IMR-90 (cell line): ENCODE measurements at regions of chr12 and their contacts with region 1.

Region 1: DNA sequence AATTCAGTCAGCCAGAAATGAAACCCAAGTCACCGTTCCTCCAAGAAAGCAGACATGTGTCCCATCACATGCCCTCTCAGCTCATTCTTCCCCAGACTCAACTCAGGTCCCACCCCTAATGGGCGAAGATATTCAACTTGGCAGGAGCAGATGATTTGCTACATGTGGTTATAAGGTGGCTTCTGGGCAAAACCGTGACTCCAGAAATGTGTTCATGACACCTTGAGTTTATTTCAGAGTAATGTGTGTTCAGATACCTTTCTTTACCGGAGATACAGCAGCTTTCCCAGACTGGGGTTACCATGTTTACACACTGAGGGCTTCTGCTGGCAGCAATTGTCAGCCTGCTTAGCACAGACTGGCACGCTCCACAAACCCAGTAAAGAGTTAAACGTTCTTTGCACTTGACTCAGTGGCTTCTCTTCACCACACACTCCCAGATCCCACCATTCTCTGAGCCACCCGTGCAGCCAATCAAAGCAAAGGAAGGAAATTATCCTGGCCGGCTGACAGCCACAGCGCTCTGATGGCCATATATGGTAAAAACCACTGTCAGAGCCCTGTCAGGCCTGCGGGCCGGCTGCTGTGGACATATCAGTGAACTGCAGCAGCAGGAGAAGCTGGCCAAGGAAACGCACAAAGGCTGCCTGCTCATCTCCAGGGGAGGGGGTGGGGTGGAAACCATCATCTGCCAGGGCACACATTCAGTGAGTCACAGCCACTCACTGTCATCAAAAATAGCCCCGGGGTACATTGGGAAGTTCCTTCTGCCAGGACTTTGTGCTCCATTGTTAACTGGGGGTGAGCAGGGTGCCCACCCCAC is 39.9 kb downstream of the CORO1C start:
- DNase-seq: peak; percentile 99
- ATAC-seq: peak; percentile 84
- H3K4me3 ChIP-seq: peak overlapping the region; percentile 18
- H3K27ac ChIP-seq: peak overlapping the region; percentile 95
- H3K4me1 ChIP-seq: peaks cover 35% of the 10 kb centered on the region
- H3K27me3 ChIP-seq: no peaks in the 10 kb centered on the region
- CTCF ChIP-seq: peak; percentile 32; the same call in 1 of the 2 replicates
- POLR2A ChIP-seq: peak; percentile 82; the same call in 1 of the 2 replicates
- RAD21 ChIP-seq: peak; percentile 48

Region 2: GRCh38 chr12:108572166-108572790 is 119.1 kb before region 1 on chr12:
- CTCF ChIA-PET with region 1: no interaction called
- POLR2A ChIA-PET with region 1: no interaction called
- dilution Hi-C with region 1: no loop called
- in situ Hi-C with region 1: no loop called
- intact Hi-C with region 1: no loop called
- DNase-seq: no peak
- ATAC-seq: no peak
- H3K4me3 ChIP-seq: no peak overlapping the region
- H3K27ac ChIP-seq: no peak overlapping the region
- H3K4me1 ChIP-seq: no peaks in the 10 kb centered on the region
- H3K27me3 ChIP-seq: no peaks in the 10 kb centered on the region
- CTCF ChIP-seq: no peak
- POLR2A ChIP-seq: no peak
- RAD21 ChIP-seq: no peak

Region 3: DNA sequence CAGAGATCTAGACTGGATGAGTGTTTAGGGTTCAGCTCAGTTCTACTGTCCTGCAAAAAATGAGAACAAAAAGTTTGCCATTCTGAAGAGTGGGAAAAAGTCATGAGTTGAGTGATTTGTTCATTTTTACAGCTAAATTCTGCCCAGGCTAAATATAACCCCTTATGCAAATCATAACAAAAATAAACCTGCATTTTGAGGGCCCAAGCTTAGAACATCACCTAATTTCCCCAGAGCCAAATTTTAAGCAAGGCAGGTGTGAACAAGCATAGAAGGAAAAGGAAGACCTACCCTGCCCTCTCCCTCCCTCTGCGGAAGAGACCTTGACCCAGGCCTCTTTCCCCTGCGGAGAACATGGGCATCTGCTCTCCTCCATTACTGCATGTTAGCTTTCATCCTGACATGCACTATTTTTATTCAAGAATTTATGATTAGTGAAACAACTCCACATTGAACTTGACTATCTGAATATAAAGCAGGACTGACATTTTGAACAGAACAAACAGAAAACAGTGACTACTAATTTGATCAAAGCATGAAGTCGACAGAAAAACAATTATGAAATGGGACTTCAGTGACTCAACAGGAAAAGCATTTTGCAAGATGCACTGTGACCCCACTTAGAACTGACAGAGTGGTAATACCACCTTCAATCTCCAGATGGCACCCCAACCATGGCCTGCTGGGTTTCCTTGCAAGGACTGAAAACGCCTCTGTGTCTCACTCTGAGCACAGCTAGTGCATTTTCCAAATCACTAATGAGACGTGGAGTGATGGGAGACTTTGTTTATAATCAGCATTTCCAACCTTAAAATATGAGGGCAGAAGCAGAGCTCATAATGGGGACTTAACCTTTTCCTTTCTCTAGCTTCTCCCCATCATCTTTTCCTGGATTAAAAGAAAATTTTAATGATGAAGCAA is 26.8 kb before region 1 on chr12:
- CTCF ChIA-PET with region 1: interaction called, 7 read pairs
- POLR2A ChIA-PET with region 1: interaction called, 3 read pairs
- dilution Hi-C with region 1: no loop called
- in situ Hi-C with region 1: no loop called
- intact Hi-C with region 1: loop called (anchors 1 kb)
- DNase-seq: peak; percentile 95
- ATAC-seq: peak; percentile 92
- H3K4me3 ChIP-seq: no peak overlapping the region
- H3K27ac ChIP-seq: peak overlapping the region; percentile 85
- H3K4me1 ChIP-seq: peaks cover 30% of the 10 kb centered on the region
- H3K27me3 ChIP-seq: no peaks in the 10 kb centered on the region
- CTCF ChIP-seq: peak; percentile 98
- POLR2A ChIP-seq: peak; percentile 31; the same call in 1 of the 2 replicates
- RAD21 ChIP-seq: peak; percentile 99

Region 4: GRCh38 chr12:108701779-108702441 is 10.5 kb after region 1 on chr12:
- CTCF ChIA-PET with region 1: interaction called, 3 read pairs
- POLR2A ChIA-PET with region 1: interaction called, 13 read pairs
- dilution Hi-C with region 1: no loop called
- in situ Hi-C with region 1: no loop called
- intact Hi-C with region 1: no loop called
- DNase-seq: peak; percentile 63
- ATAC-seq: peak; percentile 48
- H3K4me3 ChIP-seq: no peak overlapping the region
- H3K27ac ChIP-seq: peak overlapping the region; percentile 91
- H3K4me1 ChIP-seq: peaks cover 34% of the 10 kb centered on the region
- H3K27me3 ChIP-seq: no peaks in the 10 kb centered on the region
- CTCF ChIP-seq: no peak
- POLR2A ChIP-seq: no peak
- RAD21 ChIP-seq: no peak

Region 5: GRCh38 chr12:108722992-108723766 is 31.8 kb after region 1 on chr12:
- CTCF ChIA-PET with region 1: interaction called, 5 read pairs
- POLR2A ChIA-PET with region 1: interaction called, 6 read pairs
- dilution Hi-C with region 1: no loop called
- in situ Hi-C with region 1: no loop called
- intact Hi-C with region 1: loop called (anchors 1 kb)
- DNase-seq: peak; percentile 95
- ATAC-seq: peak; percentile 61
- H3K4me3 ChIP-seq: peak overlapping the region; percentile 2; the same call in 1 of the 2 replicates
- H3K27ac ChIP-seq: peak overlapping the region; percentile 98
- H3K4me1 ChIP-seq: peaks cover 36% of the 10 kb centered on the region
- H3K27me3 ChIP-seq: no peaks in the 10 kb centered on the region
- CTCF ChIP-seq: no peak
- POLR2A ChIP-seq: peak; percentile 54; the same call in 1 of the 2 replicates
- RAD21 ChIP-seq: no peak

Region 6: GRCh38 chr12:108731105-108731865 is 39.9 kb after region 1 on chr12 and contains the start of gene CORO1C:
- CTCF ChIA-PET with region 1: interaction called, 5 read pairs
- POLR2A ChIA-PET with region 1: interaction called, 19 read pairs
- dilution Hi-C with region 1: no loop called
- in situ Hi-C with region 1: no loop called
- intact Hi-C with region 1: loop called (anchors 1 kb)
- DNase-seq: peak; percentile 93
- ATAC-seq: peak; percentile 80
- H3K4me3 ChIP-seq: peak within 1 kb of the TSS; percentile 90
- H3K27ac ChIP-seq: peak within 1 kb of the TSS; percentile 99
- H3K4me1 ChIP-seq: peaks cover 8% of the 10 kb centered on the region; the same call in 1 of the 2 replicates
- H3K27me3 ChIP-seq: no peaks in the 10 kb centered on the region
- CTCF ChIP-seq: peak; percentile 95
- POLR2A ChIP-seq: peak; percentile 96
- RAD21 ChIP-seq: peak; percentile 47
- total RNA-seq, gene CORO1C: 1,042 and 1,100 TPM in 2 replicates